CD8-positive, alpha-beta memory T cell (primary cell): ENCODE measurements at regions of chr15 and their contacts with region 1.

Region 1: GRCh38 chr15:66946578-66947164 is 118.7 kb upstream of the SMAD3 start:
- DNase-seq: peak; percentile 50 to 80 (median 58)
- H3K4me3 ChIP-seq: no peak overlapping the region
- H3K4me3 Mint-ChIP-seq: no peak overlapping the region
- H3K27ac ChIP-seq: no peak overlapping the region
- H3K27ac Mint-ChIP-seq: no peak overlapping the region
- H3K4me1 ChIP-seq: no peaks in the 10 kb centered on the region
- H3K4me1 Mint-ChIP-seq: peaks cover 0 to 8% (median 0%) of the 10 kb centered on the region in 3 donors
- H3K27me3 ChIP-seq: no peaks in the 10 kb centered on the region
- H3K27me3 Mint-ChIP-seq: peaks cover 0 to 2% of the 10 kb centered on the region in 2 donors

Region 2: GRCh38 chr15:66968806-66969596 is 22.3 kb after region 1 on chr15:
- CTCF ChIA-PET with region 1: no interaction called
- POLR2A ChIA-PET with region 1: no interaction called
- DNase-seq: no peak
- H3K4me3 ChIP-seq: no peak overlapping the region
- H3K4me3 Mint-ChIP-seq: no peak overlapping the region
- H3K27ac ChIP-seq: no peak overlapping the region
- H3K27ac Mint-ChIP-seq: no peak overlapping the region
- H3K4me1 ChIP-seq: no peaks in the 10 kb centered on the region
- H3K4me1 Mint-ChIP-seq: peaks cover 0 to 1% (median 0%) of the 10 kb centered on the region in 3 donors
- H3K27me3 ChIP-seq: no peaks in the 10 kb centered on the region
- H3K27me3 Mint-ChIP-seq: no peaks in the 10 kb centered on the region

Region 3: DNA sequence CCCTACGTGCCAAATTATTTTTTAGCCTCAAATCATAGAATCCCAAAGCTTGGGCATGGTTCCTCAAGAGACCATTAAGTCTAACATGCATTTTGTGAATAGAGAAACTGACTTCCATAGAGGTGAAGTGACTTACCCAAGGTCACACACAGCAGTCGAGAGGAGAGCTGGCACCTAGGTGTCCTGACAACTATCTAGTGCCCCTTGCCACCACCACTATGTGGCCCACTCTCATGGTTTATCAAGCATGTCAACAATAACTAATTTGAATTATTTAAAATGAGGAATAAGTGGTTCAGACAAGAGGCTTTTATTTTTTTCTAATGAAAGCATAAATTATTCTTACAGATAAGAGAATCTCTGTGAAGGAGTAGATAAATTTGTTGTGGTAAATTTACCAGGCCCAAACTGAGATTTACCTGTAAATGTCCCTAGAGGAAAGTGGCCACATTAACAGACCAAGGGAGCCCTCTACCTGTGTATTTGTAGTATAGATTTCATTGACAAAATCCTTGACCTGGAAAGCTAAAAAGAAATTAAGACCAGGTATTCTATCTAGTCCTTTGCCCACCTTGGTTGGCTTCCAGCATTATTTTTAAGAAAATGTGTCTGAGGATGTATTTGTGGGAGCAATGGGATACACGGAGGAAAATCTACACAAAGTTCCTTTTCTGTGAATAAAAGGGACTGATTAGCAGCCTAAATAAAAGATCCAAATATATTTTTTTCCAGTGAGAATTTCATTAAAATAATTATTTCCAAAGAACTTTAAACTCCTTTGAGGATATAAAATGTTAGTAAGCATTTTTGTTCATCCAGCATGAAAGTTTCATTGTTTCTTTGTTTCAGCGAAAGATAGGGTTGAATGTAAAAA is 357.1 kb after region 1 on chr15:
- CTCF ChIA-PET with region 1: interaction called, 42 read pairs
- POLR2A ChIA-PET with region 1: interaction called, 3 read pairs
- DNase-seq: peak in 4 of 5 donors; percentile 7 to 47 (median 37)
- H3K4me3 ChIP-seq: no peak overlapping the region
- H3K4me3 Mint-ChIP-seq: no peak overlapping the region
- H3K27ac ChIP-seq: no peak overlapping the region
- H3K27ac Mint-ChIP-seq: peak overlapping the region in 1 of 8 donors; percentile 29
- H3K4me1 ChIP-seq: no peaks in the 10 kb centered on the region
- H3K4me1 Mint-ChIP-seq: no peaks in the 10 kb centered on the region
- H3K27me3 ChIP-seq: no peaks in the 10 kb centered on the region
- H3K27me3 Mint-ChIP-seq: no peaks in the 10 kb centered on the region

Region 4: DNA sequence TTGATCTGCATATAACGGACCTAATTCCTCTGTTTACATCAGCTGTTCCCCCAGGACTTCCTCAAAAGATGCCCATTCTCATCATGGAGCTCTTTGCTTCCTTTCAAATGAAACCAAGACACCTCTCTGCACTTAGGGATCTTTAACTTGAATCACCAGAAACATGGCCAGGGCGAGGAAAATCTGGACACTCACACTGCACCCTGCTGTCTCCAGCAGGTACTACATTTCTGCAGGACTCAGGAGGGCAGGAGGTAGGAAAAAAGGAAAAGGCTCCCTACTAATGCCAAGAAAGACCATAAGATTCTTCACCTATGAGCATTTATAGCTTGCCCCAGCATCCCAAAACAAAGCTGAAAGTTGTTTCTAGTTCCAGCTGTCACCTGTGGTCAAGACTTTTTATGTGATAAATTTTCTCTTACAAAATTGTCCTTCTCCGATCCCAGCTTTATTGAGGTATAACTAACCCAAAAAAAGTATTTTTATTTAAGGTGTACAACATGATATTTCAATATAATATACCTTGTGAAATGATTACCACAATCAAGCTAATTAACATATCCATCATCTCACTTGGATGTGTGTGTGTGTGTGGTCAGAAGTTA is 486.9 kb after region 1 on chr15:
- CTCF ChIA-PET with region 1: interaction called, 14 read pairs
- POLR2A ChIA-PET with region 1: no interaction called
- DNase-seq: no peak
- H3K4me3 ChIP-seq: no peak overlapping the region
- H3K4me3 Mint-ChIP-seq: no peak overlapping the region
- H3K27ac ChIP-seq: no peak overlapping the region
- H3K27ac Mint-ChIP-seq: no peak overlapping the region
- H3K4me1 ChIP-seq: no peaks in the 10 kb centered on the region
- H3K4me1 Mint-ChIP-seq: no peaks in the 10 kb centered on the region
- H3K27me3 ChIP-seq: no peaks in the 10 kb centered on the region
- H3K27me3 Mint-ChIP-seq: no peaks in the 10 kb centered on the region